Pancreas (tissue), 10 donors: ENCODE measurements at regions of chr5 and their contacts with region 1.

Region 1: DNA sequence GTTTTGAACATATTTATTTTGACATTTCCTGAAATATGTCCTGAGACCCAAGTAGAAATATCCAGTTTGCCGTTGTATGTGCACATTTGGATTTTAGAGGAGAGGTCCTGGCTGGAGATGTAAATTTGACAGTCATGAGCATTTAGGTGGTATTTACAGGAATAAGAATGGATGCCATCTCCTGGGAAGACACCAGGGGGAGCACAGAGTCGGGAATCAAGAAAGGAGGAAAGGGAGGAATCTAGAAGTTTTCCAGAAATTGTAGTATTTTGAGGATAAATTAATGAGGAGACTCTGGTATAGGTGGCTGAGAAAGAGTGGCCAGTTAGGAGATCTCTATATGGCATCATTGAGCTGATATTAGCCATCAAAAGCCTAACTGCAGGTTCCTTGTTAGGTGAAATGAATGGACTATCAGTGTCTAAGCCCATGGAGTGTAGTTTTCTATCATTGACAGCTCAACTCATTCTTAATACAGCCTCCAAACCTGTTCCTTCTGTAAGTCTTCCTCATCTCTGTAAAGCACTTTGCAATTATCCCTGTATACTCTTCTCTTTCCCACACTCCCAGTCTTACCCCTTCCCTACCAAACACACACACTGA is 7.2 kb downstream of the GAPT start:
- DNase-seq: peak in 4 of 6 donors; percentile 10 to 36 (median 22)
- ATAC-seq: peak in 3 of 4 donors; percentile 77 to 83 (median 80)
- H3K4me3 ChIP-seq: no peak overlapping the region
- H3K27ac ChIP-seq: no peak overlapping the region
- H3K4me1 ChIP-seq: peaks cover 0 to 6% (median 0%) of the 10 kb centered on the region in 3 donors
- H3K27me3 ChIP-seq: no peaks in the 10 kb centered on the region
- CTCF ChIP-seq: peak; percentile 45 to 67 (median 56)

Region 2: GRCh38 chr5:58818462-58818861 is 320.0 kb after region 1 on chr5:
- intact Hi-C with region 1: loop called in 1 of 3 experiments (anchors 10 kb)
- DNase-seq: no peak
- ATAC-seq: no peak
- H3K4me3 ChIP-seq: no peak overlapping the region
- H3K27ac ChIP-seq: no peak overlapping the region
- H3K4me1 ChIP-seq: no peaks in the 10 kb centered on the region
- H3K27me3 ChIP-seq: no peaks in the 10 kb centered on the region
- CTCF ChIP-seq: no peak